Aorta (tissue), 5 donors: ENCODE measurements at regions of chr9 and their contacts with region 1.

Region 1: DNA sequence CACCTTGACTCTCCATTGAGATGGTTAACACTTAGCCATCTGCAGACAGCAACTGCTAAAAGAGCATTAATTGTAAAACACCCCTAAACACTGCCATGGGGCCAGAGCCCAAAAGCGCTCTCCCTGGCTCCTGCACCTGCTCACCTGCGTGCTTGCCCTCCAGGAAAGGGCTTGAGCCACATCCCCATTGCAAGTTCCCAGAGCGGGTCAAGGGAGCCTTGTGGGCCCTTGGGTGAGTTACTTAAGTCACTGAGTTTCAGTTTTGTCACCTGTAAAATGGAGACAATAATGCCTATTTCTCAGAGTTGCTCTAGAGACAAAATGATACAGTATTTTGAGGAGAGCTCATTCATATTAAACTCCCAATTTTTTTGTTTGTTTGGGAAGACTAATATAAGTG is 967.8 kb downstream of the PTPRD start:
- DNase-seq: peak in 1 of 2 donors; percentile 33
- ATAC-seq: no peak
- H3K4me3 ChIP-seq: no peak overlapping the region
- H3K27ac ChIP-seq: peak overlapping the region in 1 of 2 donors; percentile 40
- H3K4me1 ChIP-seq: peaks cover 0 to 3% of the 10 kb centered on the region in 2 donors
- H3K27me3 ChIP-seq: no peaks in the 10 kb centered on the region

Region 2: DNA sequence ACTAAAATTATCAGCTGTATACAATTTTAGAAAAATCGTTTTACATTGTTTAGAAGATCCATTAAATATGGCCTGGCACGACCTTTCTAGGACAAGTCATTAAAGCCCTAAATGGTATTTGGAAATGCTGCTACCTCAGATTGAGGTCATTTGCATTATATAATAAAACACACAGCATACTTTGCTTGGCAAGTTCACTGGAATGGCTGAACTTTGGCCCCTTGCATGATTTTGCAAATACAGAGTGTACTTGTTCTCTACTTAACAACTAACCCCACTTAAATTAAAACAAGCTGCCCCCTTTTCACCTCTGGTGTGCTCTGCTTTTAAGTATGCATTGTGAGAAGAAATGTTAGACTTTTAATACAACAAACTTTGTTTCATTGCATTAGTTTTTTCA is 107.7 kb after region 1 on chr9:
- intact Hi-C with region 1: loop called in 1 of 2 experiments (anchors 10 kb)
- DNase-seq: no peak
- ATAC-seq: no peak
- H3K4me3 ChIP-seq: no peak overlapping the region
- H3K27ac ChIP-seq: no peak overlapping the region
- H3K4me1 ChIP-seq: peaks cover 1 to 3% of the 10 kb centered on the region in 2 donors
- H3K27me3 ChIP-seq: no peaks in the 10 kb centered on the region